CD4-positive, alpha-beta memory T cell (primary cell): ENCODE measurements at regions of chr9 and their contacts with region 1.

Region 1: GRCh38 chr9:36023260-36024048 is 13.3 kb upstream of the RECK start:
- DNase-seq: peak; percentile 62 to 66 (median 64)
- H3K4me3 ChIP-seq: no peak overlapping the region
- H3K4me3 Mint-ChIP-seq: no peak overlapping the region
- H3K27ac ChIP-seq: no peak overlapping the region
- H3K27ac Mint-ChIP-seq: no peak overlapping the region
- H3K4me1 ChIP-seq: no peaks in the 10 kb centered on the region
- H3K4me1 Mint-ChIP-seq: peaks cover 0 to 2% (median under 1%) of the 10 kb centered on the region in 4 donors
- H3K27me3 ChIP-seq: peaks cover 4% of the 10 kb centered on the region
- H3K27me3 Mint-ChIP-seq: peaks cover 0 to 12% of the 10 kb centered on the region in 2 donors

Region 2: GRCh38 chr9:35903049-35903448 is 120.4 kb before region 1 on chr9:
- CTCF ChIA-PET with region 1: interaction called, 32 read pairs
- POLR2A ChIA-PET with region 1: no interaction called
- intact Hi-C with region 1: loop called (anchors 1 kb)
- DNase-seq: peak in 4 of 5 donors; percentile 64 to 68 (median 65)
- H3K4me3 ChIP-seq: no peak overlapping the region
- H3K4me3 Mint-ChIP-seq: peak overlapping the region in 1 of 8 donors; percentile 13
- H3K27ac ChIP-seq: no peak overlapping the region
- H3K27ac Mint-ChIP-seq: peak overlapping the region in 3 of 7 donors; percentile 30 to 58 (median 48)
- H3K4me1 ChIP-seq: peaks cover 40% of the 10 kb centered on the region
- H3K4me1 Mint-ChIP-seq: peaks cover 17 to 50% (median 31%) of the 10 kb centered on the region in 4 donors
- H3K27me3 ChIP-seq: no peaks in the 10 kb centered on the region
- H3K27me3 Mint-ChIP-seq: peaks cover 0 to 4% of the 10 kb centered on the region in 2 donors

Region 3: GRCh38 chr9:35945341-35946018 is 78.0 kb before region 1 on chr9:
- CTCF ChIA-PET with region 1: interaction called, 12 read pairs
- POLR2A ChIA-PET with region 1: no interaction called
- intact Hi-C with region 1: no loop called
- DNase-seq: peak; percentile 43 to 58 (median 55)
- H3K4me3 ChIP-seq: no peak overlapping the region
- H3K4me3 Mint-ChIP-seq: peak overlapping the region in 7 of 8 donors; percentile 26 to 74 (median 61)
- H3K27ac ChIP-seq: no peak overlapping the region
- H3K27ac Mint-ChIP-seq: peak overlapping the region; percentile 3 to 82 (median 58)
- H3K4me1 ChIP-seq: peaks cover 70% of the 10 kb centered on the region
- H3K4me1 Mint-ChIP-seq: peaks cover 43 to 72% (median 65%) of the 10 kb centered on the region in 4 donors
- H3K27me3 ChIP-seq: no peaks in the 10 kb centered on the region
- H3K27me3 Mint-ChIP-seq: no peaks in the 10 kb centered on the region

Region 4: DNA sequence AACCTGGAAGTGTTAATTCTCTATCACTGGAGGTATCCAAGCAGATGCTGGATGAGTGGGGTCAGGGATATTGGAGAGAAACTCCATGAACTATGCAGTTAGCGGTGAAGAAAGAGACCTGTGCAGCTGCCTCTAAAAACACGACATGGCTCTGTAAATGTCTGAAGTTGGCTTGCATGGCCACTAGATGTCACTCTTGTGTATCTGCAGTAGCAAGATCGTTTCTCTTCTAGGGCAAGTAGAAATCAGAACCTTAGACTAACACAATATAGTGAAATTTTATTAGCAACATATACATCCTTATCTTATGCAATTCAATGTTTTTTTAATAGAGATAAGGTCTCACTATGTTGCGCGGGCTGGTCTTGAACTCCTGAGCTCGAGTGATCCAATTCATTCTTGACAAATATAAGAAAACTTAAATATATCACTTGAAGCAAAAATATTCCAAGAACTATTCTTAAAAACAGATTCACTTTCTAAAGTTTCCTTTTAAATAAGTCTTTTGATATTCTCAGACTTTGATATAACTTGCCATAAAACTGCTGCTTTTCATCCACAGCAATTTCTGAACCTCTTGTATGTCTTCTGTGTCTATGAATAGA is 68.4 kb before region 1 on chr9:
- CTCF ChIA-PET with region 1: interaction called, 31 read pairs
- POLR2A ChIA-PET with region 1: no interaction called
- intact Hi-C with region 1: loop called (anchors 1 kb)
- DNase-seq: peak; percentile 43 to 68 (median 65)
- H3K4me3 ChIP-seq: no peak overlapping the region
- H3K4me3 Mint-ChIP-seq: peak overlapping the region in 1 of 8 donors; percentile 44
- H3K27ac ChIP-seq: no peak overlapping the region
- H3K27ac Mint-ChIP-seq: no peak overlapping the region
- H3K4me1 ChIP-seq: peaks cover 6% of the 10 kb centered on the region
- H3K4me1 Mint-ChIP-seq: peaks cover 5 to 7% (median 6%) of the 10 kb centered on the region in 4 donors
- H3K27me3 ChIP-seq: no peaks in the 10 kb centered on the region
- H3K27me3 Mint-ChIP-seq: peaks cover 4 to 9% of the 10 kb centered on the region in 2 donors

Region 5: GRCh38 chr9:36008774-36009300 is 14.6 kb before region 1 on chr9:
- CTCF ChIA-PET with region 1: interaction called, 116 read pairs
- POLR2A ChIA-PET with region 1: no interaction called
- intact Hi-C with region 1: loop called (anchors 1 kb)
- DNase-seq: peak; percentile 59 to 74 (median 68)
- H3K4me3 ChIP-seq: no peak overlapping the region
- H3K4me3 Mint-ChIP-seq: peak overlapping the region in 1 of 8 donors; percentile 22
- H3K27ac ChIP-seq: no peak overlapping the region
- H3K27ac Mint-ChIP-seq: peak overlapping the region in 1 of 7 donors; percentile 10
- H3K4me1 ChIP-seq: peaks cover 3% of the 10 kb centered on the region
- H3K4me1 Mint-ChIP-seq: peaks cover 14 to 17% (median 15%) of the 10 kb centered on the region in 4 donors
- H3K27me3 ChIP-seq: no peaks in the 10 kb centered on the region
- H3K27me3 Mint-ChIP-seq: peaks cover 10 to 23% of the 10 kb centered on the region in 2 donors

Region 6: GRCh38 chr9:36036780-36037548 is 13.5 kb after region 1 on chr9 and contains the start of gene RECK:
- CTCF ChIA-PET with region 1: interaction called, 31 read pairs
- POLR2A ChIA-PET with region 1: no interaction called
- intact Hi-C with region 1: no loop called
- DNase-seq: peak; percentile 79 to 82 (median 81)
- H3K4me3 ChIP-seq: peak within 1 kb of the TSS; percentile 57 to 86
- H3K4me3 Mint-ChIP-seq: peak within 1 kb of the TSS; percentile 88 to 99 (median 96)
- H3K27ac ChIP-seq: peak within 1 kb of the TSS; percentile 58
- H3K27ac Mint-ChIP-seq: peak within 1 kb of the TSS; percentile 18 to 97 (median 89)
- H3K4me1 ChIP-seq: peaks cover 36% of the 10 kb centered on the region
- H3K4me1 Mint-ChIP-seq: peaks cover 24 to 47% (median 38%) of the 10 kb centered on the region in 4 donors
- H3K27me3 ChIP-seq: no peaks in the 10 kb centered on the region
- H3K27me3 Mint-ChIP-seq: peaks cover 0 to 2% of the 10 kb centered on the region in 2 donors
- total RNA-seq, gene RECK: 12.1 to 12.8 TPM